Activated T-helper 1 cell treated with anti-CD3 and anti-CD28 coated beads, Interleukin-12 subunit alpha, Interleukin-12 subunit beta, Interleukin-2, Interleukin-4 antibody, amounts not matched to agents 30 ng/mL and 10 ng/mL and 1 ng/mL, durations not matched to agents 14 hours and 24 hours and 36 hours (primary cell): ENCODE measurements at regions of chr16 and their contacts with region 1.

Region 1: GRCh38 chr16:89586853-89587252 is 11.3 kb downstream of the CPNE7 start:
- DNase-seq: no peak
- H3K4me3 Mint-ChIP-seq: no peak overlapping the region
- H3K27ac Mint-ChIP-seq: no peak overlapping the region
- H3K4me1 Mint-ChIP-seq: no peaks in the 10 kb centered on the region
- H3K27me3 Mint-ChIP-seq: no peaks in the 10 kb centered on the region

Region 2: DNA sequence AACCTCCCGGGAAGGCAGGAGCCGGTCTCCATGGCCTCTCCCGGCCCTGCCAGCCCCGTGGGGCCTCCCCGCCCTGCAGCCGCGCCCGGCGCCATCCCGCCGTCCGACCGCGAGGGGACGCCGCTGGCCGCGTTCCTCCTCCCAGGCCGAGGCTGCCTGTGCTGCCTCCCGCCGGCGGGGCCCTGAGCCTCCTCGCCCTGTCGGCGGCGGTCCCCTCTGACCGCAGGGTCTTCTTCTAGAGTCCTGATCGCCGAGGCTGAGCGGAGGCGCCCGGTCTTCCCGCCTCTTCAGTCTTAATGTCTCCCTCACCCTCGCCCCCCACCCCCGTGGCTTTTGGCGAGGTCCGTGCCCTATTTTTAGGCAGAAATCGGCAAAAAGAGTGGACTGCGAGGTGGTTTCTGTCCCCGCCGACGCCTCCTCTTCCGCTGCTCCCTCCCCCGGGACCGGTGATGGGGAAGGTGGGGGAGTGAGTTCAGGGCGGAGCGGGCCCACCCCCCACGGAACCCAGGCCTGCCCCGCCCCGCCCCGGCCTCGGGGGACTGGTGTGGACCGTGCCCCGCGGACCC is 12.1 kb before region 1 on chr16:
- intact Hi-C with region 1: loop called (anchors 1 kb)
- DNase-seq: peak; percentile 33
- H3K4me3 Mint-ChIP-seq: peak overlapping the region; percentile 39
- H3K27ac Mint-ChIP-seq: no peak overlapping the region
- H3K4me1 Mint-ChIP-seq: peaks cover 10% of the 10 kb centered on the region
- H3K27me3 Mint-ChIP-seq: peaks cover 26% of the 10 kb centered on the region

Region 3: DNA sequence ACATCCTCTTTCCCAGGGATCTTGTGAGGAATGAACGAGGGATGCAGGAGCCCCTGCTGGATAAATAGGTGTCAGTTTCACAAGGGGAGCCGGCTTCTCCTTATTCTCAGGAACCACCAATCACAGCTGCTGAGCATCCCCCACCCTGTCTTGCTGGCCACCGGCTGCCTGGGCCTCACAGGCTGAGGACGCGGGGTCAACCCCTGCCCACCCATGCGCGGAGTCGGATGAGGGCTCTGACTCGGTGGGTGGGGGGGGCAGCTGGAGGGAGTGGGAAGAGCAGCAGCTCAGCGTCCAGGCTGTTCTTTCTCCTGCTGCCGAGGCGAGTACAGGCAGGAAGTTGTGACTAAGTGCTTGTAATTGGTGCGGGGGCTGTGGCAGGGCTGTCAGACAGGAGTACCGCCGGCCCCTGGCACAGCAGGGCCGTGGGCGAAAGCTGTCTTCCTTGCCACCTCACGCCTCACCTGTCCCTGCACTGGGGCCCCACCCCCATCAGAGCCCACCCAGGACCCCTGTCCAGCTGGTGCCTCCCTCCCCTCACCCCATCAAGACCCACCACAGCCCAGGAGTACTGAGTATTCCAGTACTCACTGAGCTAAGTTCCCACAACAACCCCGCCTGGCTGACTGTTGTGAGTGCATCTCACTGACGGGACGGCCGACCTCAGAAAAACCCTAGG is 15.6 kb after region 1 on chr16:
- intact Hi-C with region 1: no loop called
- DNase-seq: peak; percentile 26
- H3K4me3 Mint-ChIP-seq: no peak overlapping the region
- H3K27ac Mint-ChIP-seq: peak overlapping the region; percentile 7
- H3K4me1 Mint-ChIP-seq: peaks cover 13% of the 10 kb centered on the region
- H3K27me3 Mint-ChIP-seq: no peaks in the 10 kb centered on the region